ENCODE measurements at regions of chr2 and their contacts with region 1.

Region 1: DNA sequence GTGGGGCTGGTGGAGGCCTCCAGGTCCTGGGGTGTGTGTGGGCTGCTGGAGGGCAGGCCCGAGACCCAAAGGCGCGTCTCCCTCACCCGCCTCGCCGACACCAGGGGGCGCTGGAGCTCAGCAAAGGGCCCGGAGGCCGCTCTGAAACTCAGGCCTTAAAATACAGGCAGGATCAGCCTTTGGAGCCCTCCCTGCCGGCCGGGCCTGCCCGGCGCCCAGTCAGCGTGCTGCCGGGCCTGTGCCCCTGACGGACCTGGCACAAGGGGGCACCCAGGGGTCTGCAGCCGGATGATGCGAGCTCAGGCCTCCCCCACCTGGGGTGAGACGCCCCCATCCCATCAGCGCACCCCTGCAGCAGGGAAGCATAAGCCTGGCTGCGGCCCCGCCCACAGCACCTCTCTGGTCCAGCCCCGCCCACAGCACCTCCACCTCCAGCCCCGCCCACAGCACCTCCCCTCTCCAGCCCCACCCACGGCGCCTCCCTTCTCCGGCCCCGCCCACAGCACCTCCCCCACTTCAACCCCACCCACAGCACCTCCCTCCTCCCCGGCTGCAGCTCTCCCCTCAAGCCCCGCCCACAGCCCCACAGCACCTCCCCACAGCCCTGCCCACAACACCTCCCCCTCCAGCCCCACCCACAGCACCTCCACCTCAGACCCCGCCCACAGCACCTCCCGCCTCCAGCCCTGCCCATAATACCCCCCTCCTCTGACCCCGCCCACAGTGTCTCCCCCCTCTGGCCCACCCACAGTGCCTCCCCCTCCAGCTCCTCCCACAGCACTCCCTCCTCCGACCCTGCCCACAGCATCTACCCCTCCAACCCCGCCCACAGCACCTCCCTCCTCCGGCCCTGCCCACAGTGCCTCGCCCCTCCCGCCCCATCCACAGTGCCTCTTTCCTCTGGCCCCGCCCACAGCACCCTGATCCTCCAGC is 92.8 kb upstream of the OTOS start:
- DNase-seq: peak; percentile 82
- ATAC-seq: peak; percentile 85
- H3K4me3 Mint-ChIP-seq: no peak overlapping the region
- H3K27ac Mint-ChIP-seq: no peak overlapping the region
- H3K4me1 Mint-ChIP-seq: peaks cover 3% of the 10 kb centered on the region
- H3K27me3 Mint-ChIP-seq: peaks cover 8% of the 10 kb centered on the region
- CTCF ChIP-seq: peak; percentile 91

Region 2: GRCh38 chr2:240244543-240244942 is 11.3 kb after region 1 on chr2:
- CTCF ChIA-PET with region 1: interaction called, 10 read pairs
- POLR2A ChIA-PET with region 1: no interaction called
- intact Hi-C with region 1: no loop called
- DNase-seq: no peak
- ATAC-seq: no peak
- H3K4me3 Mint-ChIP-seq: no peak overlapping the region
- H3K27ac Mint-ChIP-seq: no peak overlapping the region
- H3K4me1 Mint-ChIP-seq: no peaks in the 10 kb centered on the region
- H3K27me3 Mint-ChIP-seq: peaks cover 14% of the 10 kb centered on the region
- CTCF ChIP-seq: no peak

Region 3: DNA sequence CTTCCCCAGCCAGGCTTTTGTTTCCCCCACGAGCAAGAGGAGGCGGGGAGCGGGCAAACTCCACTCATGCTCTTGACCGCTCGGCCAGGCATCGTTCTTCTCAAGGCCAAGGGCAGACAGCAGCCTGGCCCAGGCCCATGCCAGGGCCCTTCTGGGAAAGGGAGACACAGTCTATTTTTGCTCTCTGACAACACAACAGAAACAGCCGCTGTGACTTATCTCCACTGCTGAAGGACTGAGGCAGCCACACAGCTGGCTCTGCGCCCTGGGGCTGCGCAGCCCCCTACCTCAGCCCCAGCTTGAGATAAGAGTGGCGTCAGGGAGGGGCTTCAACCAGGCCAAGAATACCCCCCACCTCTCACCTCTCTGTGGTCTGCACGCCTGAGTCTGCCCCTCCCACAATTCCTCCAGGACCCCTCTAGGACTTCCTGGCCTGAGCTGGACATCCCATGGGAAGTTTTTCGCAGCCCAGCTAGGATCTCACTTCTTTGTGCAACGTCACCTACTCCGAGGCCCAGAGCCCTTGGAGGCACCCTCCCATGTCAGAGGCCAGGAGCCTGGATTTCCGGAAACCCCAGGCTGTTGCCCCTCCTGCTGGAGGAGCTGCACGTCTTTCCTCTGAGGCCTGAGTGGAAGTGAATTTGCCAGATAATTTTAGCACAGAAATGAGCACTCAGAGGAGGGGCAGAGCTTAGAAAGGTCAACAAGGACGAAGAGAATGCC is 26.1 kb after region 1 on chr2:
- CTCF ChIA-PET with region 1: no interaction called
- POLR2A ChIA-PET with region 1: no interaction called
- intact Hi-C with region 1: no loop called
- DNase-seq: no peak
- ATAC-seq: no peak
- H3K4me3 Mint-ChIP-seq: no peak overlapping the region
- H3K27ac Mint-ChIP-seq: no peak overlapping the region
- H3K4me1 Mint-ChIP-seq: no peaks in the 10 kb centered on the region
- H3K27me3 Mint-ChIP-seq: no peaks in the 10 kb centered on the region
- CTCF ChIP-seq: no peak

Region 4: DNA sequence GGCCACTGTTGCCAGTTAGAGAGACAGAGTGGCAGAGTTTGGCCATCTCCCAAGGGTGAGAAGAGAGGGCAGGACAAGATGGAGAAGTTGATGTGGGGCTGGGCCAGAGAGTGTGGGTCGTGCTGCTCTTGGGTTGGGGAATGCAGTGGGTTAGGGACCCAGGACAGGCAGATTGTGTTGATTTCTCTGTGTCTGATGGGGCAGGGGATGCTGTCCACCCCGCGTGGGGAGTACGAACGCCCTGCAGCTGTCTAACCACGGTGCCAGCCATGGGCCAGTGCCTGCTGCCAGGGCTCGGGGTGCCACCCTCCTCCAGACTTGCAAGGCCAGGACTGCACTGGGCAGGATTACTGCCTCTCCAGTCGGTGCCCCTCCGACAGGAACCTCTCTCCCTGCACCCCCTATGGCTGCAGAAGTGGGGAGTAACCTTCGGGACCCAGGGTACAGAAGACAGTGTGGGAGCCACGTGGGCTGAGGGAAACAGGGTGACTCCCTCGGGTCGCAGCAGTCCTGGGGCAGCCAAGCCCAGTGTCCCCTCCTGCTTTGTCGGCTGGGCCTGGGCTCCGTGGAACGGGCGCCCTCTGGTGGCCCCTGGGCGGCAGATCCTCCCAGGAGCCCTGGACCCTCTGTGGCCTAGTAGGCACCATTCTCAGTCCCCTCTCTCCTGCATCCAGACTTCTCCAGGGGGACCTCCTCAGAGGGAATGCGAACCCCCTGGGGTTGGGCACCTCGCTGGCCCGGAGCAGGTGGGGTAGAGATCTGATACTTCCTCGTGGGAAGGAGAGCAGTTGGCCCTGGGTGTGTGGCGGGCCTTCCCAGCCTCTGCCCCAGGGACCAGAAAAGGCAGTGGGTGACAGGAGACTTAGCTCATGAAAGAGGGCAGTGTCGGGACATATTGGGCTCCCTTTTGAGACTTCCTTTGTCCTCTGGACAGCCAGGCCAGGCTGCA is 204.9 kb after region 1 on chr2:
- CTCF ChIA-PET with region 1: interaction called, 9 read pairs
- POLR2A ChIA-PET with region 1: no interaction called
- intact Hi-C with region 1: loop called (anchors 2 kb)
- DNase-seq: peak; percentile 72
- ATAC-seq: peak; percentile 49
- H3K4me3 Mint-ChIP-seq: no peak overlapping the region
- H3K27ac Mint-ChIP-seq: no peak overlapping the region
- H3K4me1 Mint-ChIP-seq: peaks cover 7% of the 10 kb centered on the region
- H3K27me3 Mint-ChIP-seq: peaks cover 17% of the 10 kb centered on the region
- CTCF ChIP-seq: peak; percentile 97

Measured in activated CD8-positive, alpha-beta T cell treated with anti-CD3 and anti-CD28 coated beads for 36 hours (primary cell).